ENCODE measurements at regions of chr5 and their contacts with region 1.

Region 1: DNA sequence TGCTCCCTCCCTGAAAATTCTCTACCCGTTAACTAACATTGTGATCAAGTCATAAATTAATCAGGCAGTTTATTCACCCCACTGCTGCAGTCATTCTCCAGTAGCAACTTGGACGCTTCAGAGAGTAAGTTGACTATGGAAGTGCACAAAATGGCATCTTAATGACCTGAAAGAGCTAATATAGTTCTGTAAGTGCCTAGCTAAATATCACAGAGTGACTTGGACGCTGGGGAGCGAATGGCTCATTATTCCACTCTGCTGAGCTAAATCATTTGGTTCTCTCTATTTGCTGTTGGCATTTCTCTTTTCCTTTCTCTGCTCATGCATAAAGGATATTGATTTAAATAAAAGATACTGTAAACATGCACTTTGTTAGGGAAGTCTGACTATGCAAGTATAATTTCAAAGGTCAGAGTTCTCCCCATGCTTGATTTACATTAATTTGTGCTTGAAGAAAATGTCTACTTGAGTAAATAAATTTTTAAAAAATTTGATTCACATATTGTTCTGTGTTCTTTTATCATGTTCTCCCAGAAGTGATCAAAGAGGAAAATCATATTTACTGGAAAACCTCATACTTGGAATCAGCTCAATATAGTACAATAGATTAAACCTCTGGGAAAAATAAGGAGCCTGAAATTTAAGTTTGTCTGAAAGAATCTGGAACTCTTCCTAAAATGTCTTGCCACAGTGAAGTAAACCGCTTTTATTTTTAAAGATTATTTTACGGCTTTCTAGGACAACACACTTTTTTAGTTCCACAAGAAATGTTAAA is 169.5 kb upstream of the HAPLN1 start:
- DNase-seq: no peak
- H3K4me3 ChIP-seq: no peak overlapping the region
- H3K27ac ChIP-seq: no peak overlapping the region
- H3K4me1 ChIP-seq: no peaks in the 10 kb centered on the region
- CTCF ChIP-seq: no peak

Region 2: GRCh38 chr5:83877911-83878706 is 12.0 kb before region 1 on chr5:
- CTCF ChIA-PET with region 1: no interaction called
- POLR2A ChIA-PET with region 1: interaction called, 10 read pairs
- intact Hi-C with region 1: no loop called
- DNase-seq: no peak
- H3K4me3 ChIP-seq: no peak overlapping the region
- H3K27ac ChIP-seq: no peak overlapping the region
- H3K4me1 ChIP-seq: no peaks in the 10 kb centered on the region
- CTCF ChIP-seq: no peak

Region 3: DNA sequence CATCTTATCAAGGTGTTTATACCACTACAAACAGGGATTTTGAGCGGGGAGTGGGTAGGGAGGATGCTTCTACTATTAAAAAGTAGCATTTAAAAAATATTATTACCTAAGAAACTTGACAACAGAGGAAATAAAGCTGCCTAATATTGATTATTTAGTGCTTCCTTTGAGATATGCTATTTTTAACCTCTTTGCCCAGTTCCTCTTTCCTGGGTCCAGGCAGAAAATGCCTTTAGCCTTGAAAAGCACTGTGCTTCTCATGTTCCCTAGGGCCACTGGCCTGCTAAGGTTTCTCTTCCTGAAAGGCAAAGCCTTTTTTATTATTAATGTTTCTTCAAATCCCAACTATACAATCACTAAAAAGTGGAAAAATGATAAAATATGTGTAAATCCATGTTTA is 47.7 kb after region 1 on chr5:
- CTCF ChIA-PET with region 1: no interaction called
- POLR2A ChIA-PET with region 1: no interaction called
- intact Hi-C with region 1: no loop called
- DNase-seq: no peak
- H3K4me3 ChIP-seq: no peak overlapping the region
- H3K27ac ChIP-seq: no peak overlapping the region
- H3K4me1 ChIP-seq: no peaks in the 10 kb centered on the region
- CTCF ChIP-seq: no peak

Region 4: GRCh38 chr5:83991566-83992224 is 101.5 kb after region 1 on chr5:
- CTCF ChIA-PET with region 1: no interaction called
- POLR2A ChIA-PET with region 1: no interaction called
- intact Hi-C with region 1: no loop called
- DNase-seq: no peak
- H3K4me3 ChIP-seq: no peak overlapping the region
- H3K27ac ChIP-seq: no peak overlapping the region
- H3K4me1 ChIP-seq: no peaks in the 10 kb centered on the region
- CTCF ChIP-seq: no peak

Measured in OCI-LY7 (cell line).